H1 (cell line): ENCODE measurements at regions of chr9 and their contacts with region 1.

Region 1: GRCh38 chr9:131478421-131478868 is 24.3 kb upstream of the POMT1 start:
- DNase-seq: peak; percentile 33 to 85
- H3K4me3 ChIP-seq: no peak overlapping the region
- H3K27ac ChIP-seq: no peak overlapping the region
- H3K4me1 ChIP-seq: no peaks in the 10 kb centered on the region
- H3K27me3 ChIP-seq: no peaks in the 10 kb centered on the region
- CTCF ChIP-seq: peak; percentile 55 to 85 (median 68)
- EP300 ChIP-seq: no peak
- POLR2A ChIP-seq: no peak
- RAD21 ChIP-seq: peak; percentile 43 to 49

Region 2: GRCh38 chr9:131459056-131459455 is 19.4 kb before region 1 on chr9:
- CTCF ChIA-PET with region 1: interaction called, 31 read pairs
- POLR2A ChIA-PET with region 1: interaction called, 5 read pairs
- DNase-seq: no peak
- H3K4me3 ChIP-seq: no peak overlapping the region
- H3K27ac ChIP-seq: no peak overlapping the region
- H3K4me1 ChIP-seq: no peaks in the 10 kb centered on the region
- H3K27me3 ChIP-seq: no peaks in the 10 kb centered on the region
- CTCF ChIP-seq: no peak
- EP300 ChIP-seq: no peak
- POLR2A ChIP-seq: no peak
- RAD21 ChIP-seq: no peak

Region 3: GRCh38 chr9:131491001-131491710 is 12.7 kb after region 1 on chr9:
- CTCF ChIA-PET with region 1: interaction called, 17 read pairs
- POLR2A ChIA-PET with region 1: interaction called, 4 read pairs
- DNase-seq: no peak
- H3K4me3 ChIP-seq: no peak overlapping the region
- H3K27ac ChIP-seq: no peak overlapping the region
- H3K4me1 ChIP-seq: no peaks in the 10 kb centered on the region
- H3K27me3 ChIP-seq: no peaks in the 10 kb centered on the region
- CTCF ChIP-seq: no peak
- EP300 ChIP-seq: no peak
- POLR2A ChIP-seq: no peak
- RAD21 ChIP-seq: no peak